PC-3 (cell line): ENCODE measurements at regions of chr10 and their contacts with region 1.

Region 1: GRCh38 chr10:102167861-102168260 is 15.7 kb downstream of the NOLC1 start:
- DNase-seq: no peak
- ATAC-seq: no peak
- H3K4me3 ChIP-seq: no peak overlapping the region
- H3K27ac ChIP-seq: no peak overlapping the region
- H3K4me1 ChIP-seq: no peaks in the 10 kb centered on the region; the same call in 1 of the 2 replicates
- H3K27me3 ChIP-seq: no peaks in the 10 kb centered on the region
- CTCF ChIP-seq: no peak

Region 2: GRCh38 chr10:101812606-101813005 is 355.3 kb before region 1 on chr10:
- CTCF ChIA-PET with region 1: no interaction called
- POLR2A ChIA-PET with region 1: no interaction called
- intact Hi-C with region 1: no loop called
- DNase-seq: no peak
- ATAC-seq: no peak
- H3K4me3 ChIP-seq: no peak overlapping the region
- H3K27ac ChIP-seq: no peak overlapping the region
- H3K4me1 ChIP-seq: peaks cover 9% of the 10 kb centered on the region
- H3K27me3 ChIP-seq: no peaks in the 10 kb centered on the region
- CTCF ChIP-seq: no peak

Region 3: GRCh38 chr10:102038410-102038809 is 129.5 kb before region 1 on chr10:
- CTCF ChIA-PET with region 1: interaction called, 17 read pairs
- POLR2A ChIA-PET with region 1: no interaction called
- intact Hi-C with region 1: no loop called
- DNase-seq: no peak
- ATAC-seq: no peak
- H3K4me3 ChIP-seq: no peak overlapping the region
- H3K27ac ChIP-seq: no peak overlapping the region
- H3K4me1 ChIP-seq: no peaks in the 10 kb centered on the region
- H3K27me3 ChIP-seq: no peaks in the 10 kb centered on the region
- CTCF ChIP-seq: no peak

Region 4: DNA sequence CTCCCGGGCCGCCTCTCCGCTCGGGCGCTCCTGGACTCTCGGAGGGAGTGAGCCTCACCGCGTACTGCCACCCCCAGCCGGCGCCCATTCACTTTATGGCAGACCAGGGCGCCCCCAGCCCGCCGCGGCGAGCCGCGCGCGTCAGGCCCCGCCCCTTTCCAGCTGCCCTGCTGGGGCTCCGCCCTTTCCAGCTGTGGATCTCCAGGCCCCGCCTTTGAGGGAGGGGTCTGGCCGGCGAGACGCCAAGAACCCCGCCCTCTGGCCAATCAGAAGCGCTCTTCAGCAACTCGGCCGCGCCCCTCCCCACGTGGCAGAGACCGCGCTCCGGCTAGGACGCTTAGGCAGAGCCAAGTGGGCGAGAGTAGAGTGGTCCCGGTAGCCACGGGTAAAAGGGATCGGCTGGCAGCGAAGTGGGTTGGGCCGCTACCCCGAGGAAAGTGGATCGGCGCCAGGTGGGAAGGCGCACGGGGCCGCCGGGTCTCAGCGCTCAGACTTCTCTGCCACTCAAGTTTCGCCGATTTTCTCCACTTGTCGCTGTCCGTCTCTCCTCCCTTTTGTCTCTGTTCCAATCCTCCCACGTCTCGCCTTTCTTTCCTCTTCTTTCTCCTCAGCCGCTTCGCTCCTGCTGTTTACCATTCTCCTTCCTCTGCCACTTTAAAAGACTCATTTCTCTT is 73.7 kb after region 1 on chr10 and contains the start of gene PITX3:
- CTCF ChIA-PET with region 1: no interaction called
- POLR2A ChIA-PET with region 1: no interaction called
- intact Hi-C with region 1: no loop called
- DNase-seq: peak; percentile 69
- ATAC-seq: peak; percentile 44
- H3K4me3 ChIP-seq: peak within 1 kb of the TSS; percentile 70
- H3K27ac ChIP-seq: no peak within 1 kb of the TSS
- H3K4me1 ChIP-seq: peaks cover 18% of the 10 kb centered on the region
- H3K27me3 ChIP-seq: no peaks in the 10 kb centered on the region
- CTCF ChIP-seq: no peak
- total RNA-seq, gene PITX3: not detected in 2 replicates

Region 5: DNA sequence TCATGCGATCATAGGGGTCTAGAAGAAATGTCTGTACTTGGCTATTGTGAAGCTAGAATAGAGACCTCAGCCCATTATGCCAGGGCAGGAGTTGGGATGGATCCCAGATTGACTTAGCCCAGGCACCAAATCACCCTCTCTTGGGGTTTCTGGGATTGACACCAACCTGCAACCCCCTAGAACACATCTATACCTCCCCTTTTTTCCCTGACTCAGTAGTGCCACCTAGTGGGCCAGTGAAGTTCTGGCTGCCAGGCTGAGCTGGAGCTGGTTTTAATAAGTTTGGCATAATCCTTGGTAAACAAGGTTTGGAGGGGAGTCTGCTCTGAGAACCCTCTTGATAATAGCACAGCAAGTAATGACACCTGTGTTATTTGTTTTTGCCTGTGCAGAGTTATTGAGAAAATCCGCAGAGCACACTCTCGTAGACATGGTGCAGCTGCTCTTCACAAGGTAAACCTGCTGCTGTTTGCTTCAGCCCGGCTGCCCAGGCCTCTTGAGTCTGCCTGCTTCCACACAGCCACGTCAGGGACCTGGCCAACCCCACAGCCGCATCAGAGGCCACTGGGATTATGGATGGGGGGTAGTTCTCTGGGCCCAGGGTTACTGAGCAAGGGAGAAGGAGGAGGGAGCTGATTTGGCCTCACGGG is 184.3 kb after region 1 on chr10:
- CTCF ChIA-PET with region 1: interaction called, 9 read pairs
- POLR2A ChIA-PET with region 1: no interaction called
- intact Hi-C with region 1: loop called (anchors 2 kb)
- DNase-seq: peak; percentile 73
- ATAC-seq: no peak
- H3K4me3 ChIP-seq: no peak overlapping the region
- H3K27ac ChIP-seq: no peak overlapping the region
- H3K4me1 ChIP-seq: no peaks in the 10 kb centered on the region
- H3K27me3 ChIP-seq: no peaks in the 10 kb centered on the region
- CTCF ChIP-seq: peak; percentile 90